CD8-positive, alpha-beta T cell (primary cell): ENCODE measurements at regions of chr2 and their contacts with region 1.

Region 1: GRCh38 chr2:181190711-181191110 is 210.3 kb downstream of the UBE2E3 start:
- DNase-seq: no peak
- ATAC-seq: no peak
- H3K4me3 ChIP-seq: no peak overlapping the region
- H3K4me3 Mint-ChIP-seq: no peak overlapping the region
- H3K27ac ChIP-seq: no peak overlapping the region
- H3K27ac Mint-ChIP-seq: no peak overlapping the region
- H3K4me1 ChIP-seq: peaks cover 6% of the 10 kb centered on the region
- H3K4me1 Mint-ChIP-seq: peaks cover 45% of the 10 kb centered on the region
- H3K27me3 ChIP-seq: no peaks in the 10 kb centered on the region
- H3K27me3 Mint-ChIP-seq: no peaks in the 10 kb centered on the region
- CTCF ChIP-seq: no peak

Region 2: GRCh38 chr2:181112916-181113315 is 77.8 kb before region 1 on chr2:
- CTCF ChIA-PET with region 1: no interaction called
- POLR2A ChIA-PET with region 1: no interaction called
- intact Hi-C with region 1: no loop called
- DNase-seq: no peak
- ATAC-seq: no peak
- H3K4me3 ChIP-seq: no peak overlapping the region
- H3K4me3 Mint-ChIP-seq: no peak overlapping the region
- H3K27ac ChIP-seq: no peak overlapping the region
- H3K27ac Mint-ChIP-seq: no peak overlapping the region
- H3K4me1 ChIP-seq: peaks cover 6% of the 10 kb centered on the region
- H3K4me1 Mint-ChIP-seq: peaks cover 30% of the 10 kb centered on the region
- H3K27me3 ChIP-seq: no peaks in the 10 kb centered on the region
- H3K27me3 Mint-ChIP-seq: no peaks in the 10 kb centered on the region
- CTCF ChIP-seq: no peak

Region 3: DNA sequence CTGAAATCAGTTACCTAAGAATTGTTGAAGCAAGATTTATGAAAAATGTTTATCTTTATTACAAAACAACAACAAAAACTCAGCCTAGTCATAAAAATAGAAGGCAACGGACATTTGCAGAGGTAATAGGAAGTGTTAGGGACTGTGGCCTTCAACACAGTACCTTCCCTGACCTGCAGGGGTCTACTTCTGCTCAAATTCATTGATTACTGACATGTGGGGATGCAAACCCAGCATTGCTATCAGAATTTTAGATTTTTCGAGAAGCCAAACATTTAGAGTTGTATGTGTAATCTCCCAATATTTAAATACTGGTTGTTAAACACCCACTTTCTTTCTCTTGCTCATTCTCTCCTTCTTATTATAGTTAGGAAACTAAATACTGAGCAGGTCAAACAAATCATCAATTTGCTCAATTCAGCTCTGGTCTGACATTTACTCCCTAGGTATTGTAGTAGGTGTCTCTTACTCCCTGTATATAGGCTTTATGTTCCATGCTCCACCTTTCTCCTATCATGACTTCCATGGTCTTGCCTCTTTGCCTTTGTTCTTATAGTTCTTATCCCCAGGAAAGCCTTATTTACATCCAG is 11.8 kb before region 1 on chr2:
- CTCF ChIA-PET with region 1: interaction called, 8 read pairs
- POLR2A ChIA-PET with region 1: interaction called, 10 read pairs
- intact Hi-C with region 1: loop called in 1 of 2 experiments (anchors 2 kb)
- DNase-seq: peak in 5 of 9 experiments; percentile 34 to 73 (median 39)
- ATAC-seq: peak; percentile 79
- H3K4me3 ChIP-seq: no peak overlapping the region
- H3K4me3 Mint-ChIP-seq: no peak overlapping the region
- H3K27ac ChIP-seq: peak overlapping the region in 1 of 2 experiments; percentile 34
- H3K27ac Mint-ChIP-seq: peak overlapping the region; percentile 47
- H3K4me1 ChIP-seq: peaks cover 16% of the 10 kb centered on the region
- H3K4me1 Mint-ChIP-seq: peaks cover 54% of the 10 kb centered on the region
- H3K27me3 ChIP-seq: no peaks in the 10 kb centered on the region
- H3K27me3 Mint-ChIP-seq: no peaks in the 10 kb centered on the region
- CTCF ChIP-seq: peak; percentile 64

Region 4: GRCh38 chr2:181223234-181223633 is 32.5 kb after region 1 on chr2:
- CTCF ChIA-PET with region 1: interaction called, 3 read pairs
- POLR2A ChIA-PET with region 1: no interaction called
- intact Hi-C with region 1: loop called in 1 of 2 experiments (anchors 5 kb)
- DNase-seq: peak in 2 of 9 experiments; percentile 8 to 22
- ATAC-seq: peak; percentile 23
- H3K4me3 ChIP-seq: no peak overlapping the region
- H3K4me3 Mint-ChIP-seq: peak overlapping the region; percentile 62
- H3K27ac ChIP-seq: peak overlapping the region in 1 of 2 experiments; percentile 26
- H3K27ac Mint-ChIP-seq: peak overlapping the region; percentile 92
- H3K4me1 ChIP-seq: peaks cover 29% of the 10 kb centered on the region
- H3K4me1 Mint-ChIP-seq: peaks cover 46% of the 10 kb centered on the region
- H3K27me3 ChIP-seq: no peaks in the 10 kb centered on the region
- H3K27me3 Mint-ChIP-seq: no peaks in the 10 kb centered on the region
- CTCF ChIP-seq: no peak